Ascending aorta (tissue), 2 donors: ENCODE measurements at regions of chr14 and their contacts with region 1.

Region 1: DNA sequence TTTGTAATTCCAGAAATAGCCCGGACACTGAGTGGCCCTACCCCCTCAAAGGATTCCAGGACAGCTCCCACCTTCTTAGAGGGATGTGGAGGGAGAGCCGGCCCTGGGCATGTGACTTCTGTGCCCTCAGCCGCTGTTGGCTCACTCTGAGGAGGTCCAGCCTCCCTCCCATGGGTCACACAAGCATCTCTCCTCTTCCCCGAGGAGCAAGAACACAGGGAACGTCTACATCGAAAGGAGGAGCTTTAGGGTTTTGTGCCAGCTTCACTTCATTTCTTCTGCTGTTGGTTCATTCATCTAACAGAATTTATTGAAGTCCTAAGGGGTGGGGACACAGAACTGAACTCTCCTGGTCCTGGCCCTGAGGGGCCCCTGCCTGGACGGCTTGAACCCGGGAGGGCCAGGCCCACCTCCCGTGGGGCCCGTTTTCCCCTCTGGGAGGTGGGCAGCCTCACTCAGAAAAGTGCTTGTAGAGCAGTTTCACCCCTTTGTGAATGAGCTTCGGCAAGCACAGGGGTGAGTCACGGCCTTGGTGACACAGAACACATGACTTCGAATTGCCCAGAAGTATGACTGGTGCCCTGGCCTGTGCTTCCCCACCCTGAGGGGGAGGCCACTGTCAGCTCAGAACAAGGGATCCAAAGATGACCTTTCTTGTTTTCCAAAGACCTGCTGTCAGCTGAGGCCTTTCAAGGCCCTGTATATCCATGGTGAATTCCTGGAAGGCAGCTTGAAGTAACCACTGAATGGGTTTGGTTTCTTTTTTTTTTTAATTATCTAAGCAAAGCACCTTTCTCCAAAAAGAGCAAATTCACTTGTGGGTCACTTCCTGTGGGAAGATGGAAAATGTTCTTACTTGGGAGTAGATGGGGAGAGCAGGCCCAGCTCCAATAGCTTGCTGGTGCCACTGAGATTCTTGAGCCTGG is 39.2 kb downstream of the NFKBIA start:
- DNase-seq: peak; percentile 87 to 95
- H3K4me3 ChIP-seq: no peak overlapping the region
- H3K27ac ChIP-seq: peak overlapping the region; percentile 89 to 94
- H3K4me1 ChIP-seq: peaks cover 14 to 21% of the 10 kb centered on the region in 2 donors
- H3K27me3 ChIP-seq: no peaks in the 10 kb centered on the region
- CTCF ChIP-seq: no peak

Region 2: DNA sequence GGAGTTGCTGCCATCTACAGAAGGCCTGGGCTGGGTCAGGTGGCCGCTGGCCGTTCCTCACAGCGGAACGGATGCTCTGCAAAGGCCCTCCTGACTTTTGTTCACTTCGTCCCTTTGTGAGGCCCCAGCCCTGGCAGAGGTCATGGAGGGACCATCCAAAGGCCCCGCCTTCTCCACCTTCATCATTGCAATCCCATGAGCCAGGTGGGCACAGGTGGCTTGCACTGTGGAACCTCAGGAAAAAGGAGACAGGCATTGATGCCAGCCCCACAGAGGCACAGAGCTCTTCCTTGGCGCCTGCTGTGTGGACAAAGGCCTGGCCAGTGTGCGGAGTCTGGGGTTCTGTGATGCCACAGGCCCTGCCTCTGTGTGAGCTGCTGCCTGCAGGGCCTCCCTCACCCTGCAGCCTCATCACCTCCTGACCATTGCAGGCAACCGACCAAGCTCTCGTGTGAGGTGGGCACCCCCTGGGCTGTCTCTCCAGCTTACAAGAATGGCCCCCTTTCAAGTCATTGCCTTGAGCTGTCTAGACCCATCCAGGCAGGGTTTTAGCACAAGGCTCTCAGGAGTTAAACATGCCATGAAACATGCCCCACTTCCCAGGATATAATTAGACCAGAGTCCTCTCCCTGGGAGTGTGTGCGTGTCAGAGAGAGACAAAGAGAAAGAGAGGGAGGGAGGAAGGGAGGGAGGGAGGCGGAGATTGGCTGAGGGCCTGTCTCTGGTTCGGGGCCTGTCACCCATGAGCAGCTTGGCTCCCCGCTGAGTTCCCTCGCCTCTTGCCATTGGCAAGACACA is 19.8 kb after region 1 on chr14:
- intact Hi-C with region 1: loop called (anchors 2 kb)
- DNase-seq: peak; percentile 45 to 90
- H3K4me3 ChIP-seq: peak overlapping the region in 1 of 2 donors; percentile 8
- H3K27ac ChIP-seq: peak overlapping the region; percentile 87 to 93
- H3K4me1 ChIP-seq: peaks cover 19 to 25% of the 10 kb centered on the region in 2 donors
- H3K27me3 ChIP-seq: no peaks in the 10 kb centered on the region
- CTCF ChIP-seq: no peak

Region 3: GRCh38 chr14:35395283-35395682 is 29.9 kb after region 1 on chr14:
- intact Hi-C with region 1: no loop called
- DNase-seq: no peak
- H3K4me3 ChIP-seq: no peak overlapping the region
- H3K27ac ChIP-seq: no peak overlapping the region
- H3K4me1 ChIP-seq: peaks cover 5 to 22% of the 10 kb centered on the region in 2 donors
- H3K27me3 ChIP-seq: no peaks in the 10 kb centered on the region
- CTCF ChIP-seq: no peak